CD4-positive, alpha-beta memory T cell (primary cell): ENCODE measurements at regions of chr15 and their contacts with region 1.

Region 1: GRCh38 chr15:84734794-84735479 is 13.5 kb upstream of the ZNF592 start:
- DNase-seq: peak; percentile 72 to 88 (median 77)
- H3K4me3 ChIP-seq: peak overlapping the region; percentile 25 to 46
- H3K4me3 Mint-ChIP-seq: peak overlapping the region; percentile 77 to 90 (median 81)
- H3K27ac ChIP-seq: peak overlapping the region; percentile 41
- H3K27ac Mint-ChIP-seq: peak overlapping the region; percentile 84 to 95 (median 93)
- H3K4me1 ChIP-seq: peaks cover 53% of the 10 kb centered on the region
- H3K4me1 Mint-ChIP-seq: peaks cover 29 to 50% (median 38%) of the 10 kb centered on the region in 4 donors
- H3K27me3 ChIP-seq: no peaks in the 10 kb centered on the region
- H3K27me3 Mint-ChIP-seq: no peaks in the 10 kb centered on the region

Region 2: DNA sequence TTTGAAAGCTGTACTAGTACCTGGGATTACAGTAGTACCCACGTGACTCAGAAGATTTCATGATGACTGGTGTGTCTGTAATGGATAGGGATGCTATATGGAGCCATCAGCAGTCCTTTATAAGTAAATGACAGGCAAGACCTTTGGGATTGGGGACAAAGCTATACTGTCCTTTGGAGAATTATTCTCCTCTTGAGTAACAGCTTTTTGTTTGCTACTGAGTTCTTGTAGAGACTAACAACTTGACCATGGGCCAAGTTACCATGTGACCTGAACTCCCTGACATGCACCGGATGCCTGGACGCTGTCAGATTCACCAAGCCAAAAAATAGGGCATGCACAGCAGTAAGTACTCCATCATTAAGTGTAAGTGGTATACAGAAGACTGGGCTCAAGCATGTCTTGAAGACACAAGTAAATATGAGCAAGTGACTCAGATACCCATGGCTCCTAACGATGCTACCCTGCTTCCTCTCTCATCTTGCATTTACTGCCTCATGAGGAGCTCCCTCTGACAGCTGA is 31.9 kb before region 1 on chr15:
- CTCF ChIA-PET with region 1: interaction called, 4 read pairs
- POLR2A ChIA-PET with region 1: interaction called, 31 read pairs
- intact Hi-C with region 1: loop called (anchors 10 kb)
- DNase-seq: no peak
- H3K4me3 ChIP-seq: no peak overlapping the region
- H3K4me3 Mint-ChIP-seq: peak overlapping the region in 4 of 8 donors; percentile 2 to 16 (median 9)
- H3K27ac ChIP-seq: no peak overlapping the region
- H3K27ac Mint-ChIP-seq: peak overlapping the region in 6 of 7 donors; percentile 22 to 77 (median 50)
- H3K4me1 ChIP-seq: peaks cover 61% of the 10 kb centered on the region
- H3K4me1 Mint-ChIP-seq: peaks cover 47 to 81% (median 61%) of the 10 kb centered on the region in 4 donors
- H3K27me3 ChIP-seq: no peaks in the 10 kb centered on the region
- H3K27me3 Mint-ChIP-seq: no peaks in the 10 kb centered on the region